ENCODE measurements at regions of chr17 and their contacts with region 1.

Region 1: GRCh38 chr17:35808962-35809854 is at the start of gene TAF15:
- DNase-seq: peak; percentile 97
- ATAC-seq: peak; percentile 96
- H3K4me3 ChIP-seq: peak within 1 kb of the TSS; percentile 80
- H3K27ac ChIP-seq: peak within 1 kb of the TSS; percentile 94
- H3K4me1 ChIP-seq: peaks cover 4% of the 10 kb centered on the region
- H3K27me3 ChIP-seq: no peaks in the 10 kb centered on the region
- CTCF ChIP-seq: peak; percentile 81 to 91 (median 89)
- EP300 ChIP-seq: peak in 1 of 2 experiments; percentile 40; a peak in 1 of 4 replicates
- POLR2A ChIP-seq: peak; percentile 97
- RAD21 ChIP-seq: peak; percentile 34
- polyA plus RNA-seq, gene TAF15: 9.5 to 17.1 TPM

Region 2: GRCh38 chr17:35819456-35819855 is 10.2 kb after region 1 on chr17:
- CTCF ChIA-PET with region 1: interaction called, 11 read pairs
- POLR2A ChIA-PET with region 1: no interaction called
- RAD21 ChIA-PET with region 1: interaction called, 3 read pairs
- SMC1A ChIA-PET with region 1: interaction called, 11 read pairs
- in situ Hi-C with region 1: no loop called
- intact Hi-C with region 1: no loop called
- DNase-seq: no peak
- ATAC-seq: no peak
- H3K4me3 ChIP-seq: no peak overlapping the region
- H3K27ac ChIP-seq: no peak overlapping the region
- H3K4me1 ChIP-seq: no peaks in the 10 kb centered on the region
- H3K27me3 ChIP-seq: no peaks in the 10 kb centered on the region
- CTCF ChIP-seq: no peak
- EP300 ChIP-seq: no peak
- POLR2A ChIP-seq: no peak
- RAD21 ChIP-seq: no peak

Region 3: GRCh38 chr17:35856603-35857002 is 47.4 kb after region 1 on chr17:
- CTCF ChIA-PET with region 1: no interaction called
- POLR2A ChIA-PET with region 1: no interaction called
- RAD21 ChIA-PET with region 1: no interaction called
- SMC1A ChIA-PET with region 1: no interaction called
- in situ Hi-C with region 1: no loop called
- intact Hi-C with region 1: no loop called
- DNase-seq: no peak
- ATAC-seq: no peak
- H3K4me3 ChIP-seq: no peak overlapping the region
- H3K27ac ChIP-seq: no peak overlapping the region
- H3K4me1 ChIP-seq: no peaks in the 10 kb centered on the region
- H3K27me3 ChIP-seq: no peaks in the 10 kb centered on the region
- CTCF ChIP-seq: no peak
- EP300 ChIP-seq: no peak
- POLR2A ChIP-seq: no peak
- RAD21 ChIP-seq: no peak

Measured in GM12878 (cell line).